B cell (primary cell): ENCODE measurements at regions of chr12 and their contacts with region 1.

Region 1: DNA sequence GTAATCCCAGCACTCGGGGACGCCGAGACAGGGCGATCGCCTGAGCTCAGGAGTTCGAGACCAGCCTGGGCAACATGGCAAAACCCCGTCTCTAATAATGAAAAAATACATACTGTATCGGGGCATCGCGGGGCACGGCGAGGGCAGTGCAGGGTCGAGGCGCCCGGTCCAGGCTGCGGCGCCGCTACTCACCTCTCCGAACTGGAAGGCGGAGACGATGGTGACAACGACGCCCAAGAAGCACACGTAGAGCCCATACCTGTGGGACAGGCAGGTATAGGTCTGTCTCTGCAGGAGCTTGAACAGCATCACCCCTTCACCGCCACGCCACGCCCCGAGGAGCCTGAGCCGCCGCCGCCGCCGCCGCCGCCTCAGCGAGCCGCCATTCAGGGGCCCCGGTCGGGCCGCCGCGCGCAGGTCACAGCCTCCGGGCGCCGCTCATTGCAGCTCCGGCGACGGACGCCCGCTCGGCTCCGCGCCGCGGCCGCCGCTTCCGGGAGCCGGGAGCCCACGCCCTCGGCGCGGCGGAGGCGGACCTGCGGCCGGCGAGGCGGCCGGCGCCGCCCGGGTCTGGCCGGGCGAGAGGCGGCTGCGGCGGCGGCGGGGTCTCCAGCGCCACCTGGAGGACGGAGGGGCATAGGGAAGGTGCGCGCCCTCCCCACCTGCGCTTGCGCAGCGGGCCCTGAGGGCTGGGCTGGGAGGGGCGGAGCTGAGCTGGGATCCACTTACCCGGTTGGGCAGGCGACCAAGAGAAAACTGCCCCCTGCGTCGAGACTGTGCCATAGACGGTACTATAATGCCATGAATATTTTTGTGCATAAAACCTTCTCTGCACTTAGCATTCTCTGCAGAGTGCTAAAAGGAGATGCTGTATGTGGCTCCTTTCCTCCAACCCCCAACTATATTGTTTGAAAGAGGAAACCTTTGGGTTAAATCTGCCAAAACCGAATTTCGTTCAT is at the start of gene GNPTAB:
- DNase-seq: peak; percentile 97
- ATAC-seq: peak; percentile 93
- H3K4me3 ChIP-seq: peak within 1 kb of the TSS; percentile 65 to 88 (median 82)
- H3K4me3 Mint-ChIP-seq: peak within 1 kb of the TSS; percentile 99
- H3K27ac ChIP-seq: peak within 1 kb of the TSS; percentile 67 to 75
- H3K27ac Mint-ChIP-seq: peak within 1 kb of the TSS; percentile 92
- H3K4me1 ChIP-seq: peaks cover 17 to 22% of the 10 kb centered on the region in 2 donors
- H3K4me1 Mint-ChIP-seq: peaks cover 33% of the 10 kb centered on the region
- H3K27me3 ChIP-seq: no peaks in the 10 kb centered on the region
- H3K27me3 Mint-ChIP-seq: no peaks in the 10 kb centered on the region
- CTCF ChIP-seq: peak; percentile 68
- total RNA-seq, gene GNPTAB: 78.8 and 79.4 TPM in 2 replicates

Region 2: GRCh38 chr12:101407436-101408345 is 423.0 kb before region 1 on chr12 and contains the start of gene ARL1:
- CTCF ChIA-PET with region 1: interaction called, 13 read pairs
- POLR2A ChIA-PET with region 1: no interaction called
- intact Hi-C with region 1: no loop called
- DNase-seq: peak; percentile 92
- ATAC-seq: peak; percentile 86
- H3K4me3 ChIP-seq: peak within 1 kb of the TSS; percentile 80 to 95 (median 93)
- H3K4me3 Mint-ChIP-seq: peak within 1 kb of the TSS; percentile 99
- H3K27ac ChIP-seq: peak within 1 kb of the TSS; percentile 91 to 96
- H3K27ac Mint-ChIP-seq: peak within 1 kb of the TSS; percentile 97
- H3K4me1 ChIP-seq: peaks cover 9 to 12% of the 10 kb centered on the region in 2 donors
- H3K4me1 Mint-ChIP-seq: peaks cover 28% of the 10 kb centered on the region
- H3K27me3 ChIP-seq: no peaks in the 10 kb centered on the region
- H3K27me3 Mint-ChIP-seq: peaks cover 5% of the 10 kb centered on the region
- CTCF ChIP-seq: no peak
- total RNA-seq, gene ARL1: 40.7 and 51.2 TPM in 2 replicates

Region 3: DNA sequence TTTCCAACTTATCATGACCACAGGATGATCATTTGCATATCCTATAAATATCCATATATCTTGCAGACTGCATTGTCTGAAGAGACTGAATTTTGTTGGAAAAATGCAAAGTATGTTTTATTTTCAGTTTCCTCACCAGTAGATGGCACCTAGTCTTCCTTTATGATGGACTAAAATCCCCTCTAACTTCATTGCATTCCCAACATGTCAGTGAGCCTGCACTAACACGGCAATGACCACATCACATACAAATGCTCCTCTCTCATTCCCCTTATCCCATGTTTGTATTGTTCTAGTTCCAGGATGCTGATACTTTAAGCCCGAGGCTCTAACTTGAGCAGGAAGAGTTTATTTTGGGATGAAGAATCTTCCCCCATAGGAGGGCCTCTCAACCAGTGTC is 260.6 kb before region 1 on chr12:
- CTCF ChIA-PET with region 1: interaction called, 6 read pairs
- POLR2A ChIA-PET with region 1: no interaction called
- intact Hi-C with region 1: loop called (anchors 2 kb)
- DNase-seq: peak; percentile 53
- ATAC-seq: peak; percentile 33
- H3K4me3 ChIP-seq: peak overlapping the region in 1 of 5 experiments; percentile 22
- H3K4me3 Mint-ChIP-seq: peak overlapping the region; percentile 20
- H3K27ac ChIP-seq: no peak overlapping the region
- H3K27ac Mint-ChIP-seq: no peak overlapping the region
- H3K4me1 ChIP-seq: peaks cover 4 to 7% of the 10 kb centered on the region in 2 donors
- H3K4me1 Mint-ChIP-seq: peaks cover 4% of the 10 kb centered on the region
- H3K27me3 ChIP-seq: peaks cover 0 to 3% (median 0%) of the 10 kb centered on the region in 4 experiments
- H3K27me3 Mint-ChIP-seq: peaks cover 3% of the 10 kb centered on the region
- CTCF ChIP-seq: peak; percentile 59

Region 4: DNA sequence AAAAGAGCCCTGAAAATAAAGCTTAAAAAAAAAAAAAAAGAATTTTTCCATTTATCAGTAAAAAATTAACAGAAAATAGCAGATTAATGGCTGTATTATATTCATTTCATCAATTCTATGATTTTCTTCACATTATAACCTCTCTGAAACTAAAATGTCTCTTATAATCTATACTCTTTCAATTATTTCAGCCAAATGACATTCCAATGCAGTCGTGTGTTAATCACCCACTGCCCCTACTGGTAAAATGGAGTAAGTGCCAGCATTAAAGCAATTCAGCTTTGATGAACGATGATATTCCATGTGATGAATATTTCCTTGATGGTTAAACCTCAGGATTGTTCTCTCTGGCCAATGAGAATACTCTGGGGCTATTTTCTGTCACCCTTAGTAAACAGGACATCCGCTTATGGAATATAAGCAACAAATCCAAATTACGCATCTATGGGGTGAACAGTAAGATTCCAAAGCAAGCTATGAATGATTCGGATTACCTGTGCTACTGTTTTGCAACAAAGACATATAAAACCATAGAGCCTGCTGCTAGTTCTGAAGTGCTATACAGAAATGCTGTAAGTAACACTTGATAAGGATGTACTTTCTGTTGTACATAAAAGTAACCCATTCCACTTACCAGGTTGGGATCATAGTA is 71.1 kb before region 1 on chr12:
- CTCF ChIA-PET with region 1: interaction called, 13 read pairs
- POLR2A ChIA-PET with region 1: interaction called, 3 read pairs
- intact Hi-C with region 1: no loop called
- DNase-seq: peak; percentile 62
- ATAC-seq: peak; percentile 72
- H3K4me3 ChIP-seq: no peak overlapping the region
- H3K4me3 Mint-ChIP-seq: no peak overlapping the region
- H3K27ac ChIP-seq: no peak overlapping the region
- H3K27ac Mint-ChIP-seq: no peak overlapping the region
- H3K4me1 ChIP-seq: peaks cover 3% of the 10 kb centered on the region in 2 donors
- H3K4me1 Mint-ChIP-seq: peaks cover 20% of the 10 kb centered on the region
- H3K27me3 ChIP-seq: no peaks in the 10 kb centered on the region
- H3K27me3 Mint-ChIP-seq: no peaks in the 10 kb centered on the region
- CTCF ChIP-seq: peak; percentile 89

Region 5: DNA sequence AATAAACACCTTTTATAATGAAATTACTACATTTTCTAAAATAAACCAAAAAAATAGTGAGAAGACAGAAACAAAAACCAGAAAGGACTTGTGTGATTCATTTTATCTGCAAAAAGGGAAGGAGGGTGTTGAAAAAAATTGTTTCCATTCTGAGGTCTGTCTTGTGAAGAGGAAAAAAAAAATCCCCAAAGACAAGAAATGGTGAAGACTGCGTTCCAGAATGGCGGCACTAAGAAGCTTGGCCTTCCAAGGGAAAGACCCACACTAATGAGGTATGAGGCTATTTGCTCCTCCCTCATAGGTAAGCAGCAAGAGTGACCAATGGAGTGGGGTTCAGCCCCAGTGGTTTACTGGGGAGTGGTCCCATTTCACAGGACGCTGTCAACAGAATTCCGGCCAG is 34.9 kb before region 1 on chr12:
- CTCF ChIA-PET with region 1: interaction called, 5 read pairs
- POLR2A ChIA-PET with region 1: no interaction called
- intact Hi-C with region 1: loop called (anchors 2 kb)
- DNase-seq: no peak
- ATAC-seq: no peak
- H3K4me3 ChIP-seq: no peak overlapping the region
- H3K4me3 Mint-ChIP-seq: no peak overlapping the region
- H3K27ac ChIP-seq: no peak overlapping the region
- H3K27ac Mint-ChIP-seq: peak overlapping the region; percentile 37
- H3K4me1 ChIP-seq: peaks cover 0 to 8% of the 10 kb centered on the region in 2 donors
- H3K4me1 Mint-ChIP-seq: peaks cover 16% of the 10 kb centered on the region
- H3K27me3 ChIP-seq: no peaks in the 10 kb centered on the region
- H3K27me3 Mint-ChIP-seq: no peaks in the 10 kb centered on the region
- CTCF ChIP-seq: no peak

Region 6: DNA sequence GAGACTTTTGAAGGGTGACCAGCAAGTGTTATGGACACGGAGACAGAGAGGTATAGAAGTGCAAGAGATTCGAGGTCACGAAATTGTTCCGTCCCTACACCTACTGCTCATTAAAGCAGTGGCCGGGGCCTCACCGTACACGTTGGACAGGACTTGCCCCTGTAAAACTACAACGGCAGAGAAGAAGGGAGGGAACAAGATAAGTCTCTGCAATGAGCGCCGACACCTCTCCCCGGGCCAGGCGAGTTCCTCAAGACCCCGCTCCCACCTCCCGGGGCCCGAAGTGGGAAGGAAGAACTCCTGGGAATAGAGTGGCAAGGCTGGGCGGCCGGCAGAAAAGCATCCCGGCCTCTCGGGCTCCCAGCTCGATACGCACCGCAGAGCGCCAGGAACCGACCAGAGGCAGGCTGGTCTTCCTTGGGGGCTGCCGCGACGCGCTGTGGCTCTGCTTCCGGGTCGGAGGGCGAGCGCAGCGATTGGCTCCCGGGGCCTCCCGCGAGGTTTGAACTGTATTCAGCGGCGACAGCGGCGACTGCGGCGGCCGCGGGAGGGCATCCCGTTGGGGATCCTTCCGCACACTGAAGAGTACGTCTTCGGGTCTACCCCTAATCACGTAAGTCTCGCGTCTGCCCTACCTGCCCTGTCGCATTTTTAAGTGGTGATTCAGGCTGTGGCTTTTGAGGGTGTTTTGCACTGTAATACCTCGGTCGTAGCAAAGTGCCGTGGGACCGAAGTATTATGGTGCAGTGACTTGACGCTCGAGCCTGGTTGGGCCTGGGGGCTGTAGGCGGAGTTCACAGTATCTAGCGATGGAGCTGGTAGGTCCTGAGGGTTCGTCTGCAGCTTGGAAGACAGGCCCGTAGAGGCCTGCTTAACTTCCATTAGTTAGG is 289.3 kb after region 1 on chr12 and contains the starts of genes NUP37 and PARPBP:
- CTCF ChIA-PET with region 1: no interaction called
- POLR2A ChIA-PET with region 1: no interaction called
- intact Hi-C with region 1: loop called (anchors 5 kb)
- DNase-seq: peak; percentile 92
- ATAC-seq: peak; percentile 98
- H3K4me3 ChIP-seq: peak within 1 kb of the TSS; percentile 82 to 90 (median 84)
- H3K4me3 Mint-ChIP-seq: peak within 1 kb of the TSS; percentile 89
- H3K27ac ChIP-seq: peak within 1 kb of the TSS; percentile 80 to 88
- H3K27ac Mint-ChIP-seq: peak within 1 kb of the TSS; percentile 91
- H3K4me1 ChIP-seq: peaks cover 15 to 18% of the 10 kb centered on the region in 2 donors
- H3K4me1 Mint-ChIP-seq: peaks cover 16% of the 10 kb centered on the region
- H3K27me3 ChIP-seq: no peaks in the 10 kb centered on the region
- H3K27me3 Mint-ChIP-seq: no peaks in the 10 kb centered on the region
- CTCF ChIP-seq: no peak
- total RNA-seq, gene NUP37: 19.1 and 22.1 TPM in 2 replicates
- total RNA-seq, gene PARPBP: 5.2 and 6.6 TPM in 2 replicates